Activated CD8-positive, alpha-beta memory T cell treated with anti-CD3 and anti-CD28 coated beads, Interleukin-2, amount 10 ng/mL, durations not matched to agents 7 days and 5 days (primary cell): ENCODE measurements at regions of chr10 and their contacts with region 1.

Region 1: DNA sequence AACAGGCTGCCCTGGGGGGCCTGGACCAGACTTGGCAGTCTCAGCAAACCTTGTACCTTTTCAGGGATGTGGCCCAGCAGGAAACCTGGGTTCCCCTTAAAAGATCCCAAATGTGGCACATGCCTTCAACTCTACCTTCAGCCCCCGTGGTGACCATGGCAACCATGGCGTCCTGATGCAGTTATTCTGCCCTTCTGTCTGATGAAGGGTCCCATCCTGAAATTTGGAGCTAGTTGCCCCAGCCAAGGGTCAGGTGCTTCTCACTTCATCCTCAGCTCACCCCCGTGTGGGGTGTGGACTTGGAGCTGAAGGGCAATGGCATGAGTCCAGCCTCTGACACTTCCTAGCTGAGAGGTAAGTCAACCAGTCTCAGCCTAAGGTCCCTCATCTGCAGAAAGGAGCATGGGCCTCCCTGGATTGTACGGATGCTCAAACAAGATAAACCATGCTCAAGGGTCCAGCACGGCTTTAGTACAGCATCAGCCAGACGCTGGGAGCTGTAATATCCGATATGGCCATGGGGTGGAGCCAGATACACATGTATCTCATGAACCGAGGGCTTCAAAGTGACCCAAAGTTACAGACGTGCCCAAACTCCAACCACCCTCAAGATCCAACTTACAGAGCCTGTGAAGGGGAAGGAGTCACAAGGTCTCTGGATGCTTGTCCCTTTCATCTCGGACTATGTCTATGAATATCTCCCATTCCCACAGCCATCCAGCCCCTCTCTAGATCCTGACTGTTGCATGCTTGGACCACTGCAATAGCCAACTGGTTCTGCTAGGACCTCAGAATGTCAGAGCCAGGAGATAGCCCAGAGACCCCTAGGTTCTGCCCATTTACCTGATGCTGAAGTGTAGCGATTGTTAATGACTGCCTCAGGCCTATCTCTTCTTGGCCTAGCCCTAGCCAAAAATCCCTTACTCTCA is 142.5 kb downstream of the SH3PXD2A start:
- DNase-seq: peak; percentile 89
- ATAC-seq: peak; percentile 87
- H3K4me3 Mint-ChIP-seq: no peak overlapping the region
- H3K27ac Mint-ChIP-seq: no peak overlapping the region
- H3K4me1 Mint-ChIP-seq: peaks cover 5% of the 10 kb centered on the region
- H3K27me3 Mint-ChIP-seq: no peaks in the 10 kb centered on the region

Region 2: DNA sequence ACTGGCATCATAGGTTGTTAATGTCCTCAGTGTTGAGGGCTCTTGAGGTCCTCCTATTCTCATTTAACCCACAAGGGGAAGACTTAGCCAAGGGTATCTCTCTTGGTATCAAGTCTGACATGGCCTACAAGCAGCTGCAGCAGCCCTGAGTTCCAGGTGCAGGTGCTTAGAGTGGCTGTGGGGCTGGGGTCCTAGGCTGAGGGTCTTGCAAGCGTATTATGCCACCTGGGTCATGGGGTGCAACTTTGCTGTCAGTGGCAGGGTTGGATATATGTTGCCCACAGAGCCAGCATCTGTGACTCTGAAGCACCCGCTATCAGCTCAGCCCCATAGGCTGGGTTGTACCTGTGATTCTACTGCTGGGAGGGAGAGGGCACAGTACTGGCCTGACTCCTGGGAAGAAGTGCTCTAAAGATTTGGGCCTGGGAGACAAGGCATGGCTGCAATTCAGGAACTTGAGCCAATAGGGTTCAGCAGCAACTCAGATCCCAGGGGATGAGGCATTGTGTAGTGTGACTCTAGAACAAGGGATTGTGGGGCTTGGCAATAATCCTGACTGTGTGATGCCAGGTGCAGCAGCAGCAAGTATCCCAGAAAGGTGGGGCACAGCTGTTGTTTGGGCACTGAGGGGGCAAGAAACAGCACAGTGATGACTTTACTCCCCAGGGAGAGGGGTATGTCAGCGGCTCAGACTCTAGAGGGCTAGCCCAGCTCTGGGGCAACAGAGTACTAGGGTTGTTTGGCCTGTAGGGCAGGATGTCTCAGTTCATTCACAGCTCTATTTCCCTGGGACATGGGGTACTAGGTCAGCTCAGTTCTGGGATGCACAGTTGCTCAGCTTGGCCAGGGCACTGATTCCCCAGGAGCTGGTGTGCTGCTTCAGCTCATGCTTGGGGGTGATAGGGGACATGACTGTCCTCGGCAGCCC is 178.0 kb before region 1 on chr10:
- CTCF ChIA-PET with region 1: no interaction called
- DNase-seq: no peak
- ATAC-seq: no peak
- H3K4me3 Mint-ChIP-seq: no peak overlapping the region
- H3K27ac Mint-ChIP-seq: no peak overlapping the region
- H3K4me1 Mint-ChIP-seq: no peaks in the 10 kb centered on the region
- H3K27me3 Mint-ChIP-seq: peaks cover 32% of the 10 kb centered on the region

Region 3: DNA sequence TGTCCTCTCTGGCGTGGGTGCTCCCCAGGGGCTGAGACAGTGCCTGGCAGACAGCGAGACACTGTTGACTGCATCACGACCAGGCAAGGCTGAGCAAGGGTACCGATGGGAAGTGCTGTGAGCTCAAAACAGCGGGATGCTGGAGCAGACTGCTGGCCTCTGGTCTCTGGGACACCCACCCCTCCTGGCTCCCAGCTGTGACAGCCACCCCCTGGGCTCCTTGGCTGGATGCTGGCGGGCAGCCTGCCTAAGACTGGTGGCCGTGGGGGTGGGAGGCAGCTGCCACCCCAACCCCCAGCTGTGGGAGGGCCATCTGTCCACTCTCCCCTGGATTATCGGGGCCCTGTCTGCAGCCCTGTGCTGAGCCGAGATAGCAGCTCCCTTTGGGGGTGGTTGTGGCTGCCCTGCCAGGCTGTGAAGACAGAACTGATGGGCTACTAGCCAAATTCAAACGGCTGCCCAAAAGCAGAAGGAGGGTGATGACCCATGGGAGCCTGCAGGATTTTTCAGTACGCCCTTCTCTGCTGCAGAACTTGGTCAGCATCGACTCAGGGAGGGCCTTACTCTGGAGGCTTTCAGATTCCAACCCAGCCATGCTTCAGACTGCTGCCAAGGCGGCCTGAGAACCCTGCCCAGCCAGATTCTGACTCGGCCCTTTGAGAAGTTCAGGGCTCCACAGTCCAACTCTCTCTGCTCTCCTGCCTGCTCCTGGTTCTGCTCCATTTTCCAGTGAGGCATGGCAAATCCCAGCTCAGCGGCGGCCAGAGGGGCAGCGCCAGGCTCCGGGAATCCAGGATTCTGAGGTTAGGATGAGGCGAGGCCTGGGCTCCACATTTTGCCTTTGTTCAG is 94.0 kb before region 1 on chr10:
- CTCF ChIA-PET with region 1: no interaction called
- DNase-seq: no peak
- ATAC-seq: no peak
- H3K4me3 Mint-ChIP-seq: no peak overlapping the region
- H3K27ac Mint-ChIP-seq: no peak overlapping the region
- H3K4me1 Mint-ChIP-seq: peaks cover 7% of the 10 kb centered on the region
- H3K27me3 Mint-ChIP-seq: no peaks in the 10 kb centered on the region

Region 4: GRCh38 chr10:103759100-103759781 is 46.4 kb after region 1 on chr10:
- CTCF ChIA-PET with region 1: interaction called, 18 read pairs
- DNase-seq: peak; percentile 80
- ATAC-seq: peak; percentile 77
- H3K4me3 Mint-ChIP-seq: peak overlapping the region; percentile 8
- H3K27ac Mint-ChIP-seq: peak overlapping the region; percentile 82
- H3K4me1 Mint-ChIP-seq: peaks cover 66% of the 10 kb centered on the region
- H3K27me3 Mint-ChIP-seq: no peaks in the 10 kb centered on the region

Region 5: GRCh38 chr10:103781329-103782061 is 68.7 kb after region 1 on chr10:
- CTCF ChIA-PET with region 1: interaction called, 15 read pairs
- DNase-seq: peak; percentile 55
- ATAC-seq: peak; percentile 84
- H3K4me3 Mint-ChIP-seq: no peak overlapping the region
- H3K27ac Mint-ChIP-seq: peak overlapping the region; percentile 58
- H3K4me1 Mint-ChIP-seq: peaks cover 16% of the 10 kb centered on the region
- H3K27me3 Mint-ChIP-seq: peaks cover 37% of the 10 kb centered on the region

Region 6: GRCh38 chr10:103845972-103846371 is 133.1 kb after region 1 on chr10:
- CTCF ChIA-PET with region 1: interaction called, 144 read pairs
- DNase-seq: peak; percentile 71
- ATAC-seq: peak; percentile 86
- H3K4me3 Mint-ChIP-seq: no peak overlapping the region
- H3K27ac Mint-ChIP-seq: peak overlapping the region; percentile 53
- H3K4me1 Mint-ChIP-seq: peaks cover 19% of the 10 kb centered on the region
- H3K27me3 Mint-ChIP-seq: peaks cover 21% of the 10 kb centered on the region

Region 7: GRCh38 chr10:103868200-103868599 is 155.4 kb after region 1 on chr10:
- CTCF ChIA-PET with region 1: interaction called, 16 read pairs
- DNase-seq: no peak
- ATAC-seq: no peak
- H3K4me3 Mint-ChIP-seq: no peak overlapping the region
- H3K27ac Mint-ChIP-seq: no peak overlapping the region
- H3K4me1 Mint-ChIP-seq: no peaks in the 10 kb centered on the region
- H3K27me3 Mint-ChIP-seq: no peaks in the 10 kb centered on the region